Naive thymus-derived CD4-positive, alpha-beta T cell (primary cell): ENCODE measurements at regions of chr6 and their contacts with region 1.

Region 1: DNA sequence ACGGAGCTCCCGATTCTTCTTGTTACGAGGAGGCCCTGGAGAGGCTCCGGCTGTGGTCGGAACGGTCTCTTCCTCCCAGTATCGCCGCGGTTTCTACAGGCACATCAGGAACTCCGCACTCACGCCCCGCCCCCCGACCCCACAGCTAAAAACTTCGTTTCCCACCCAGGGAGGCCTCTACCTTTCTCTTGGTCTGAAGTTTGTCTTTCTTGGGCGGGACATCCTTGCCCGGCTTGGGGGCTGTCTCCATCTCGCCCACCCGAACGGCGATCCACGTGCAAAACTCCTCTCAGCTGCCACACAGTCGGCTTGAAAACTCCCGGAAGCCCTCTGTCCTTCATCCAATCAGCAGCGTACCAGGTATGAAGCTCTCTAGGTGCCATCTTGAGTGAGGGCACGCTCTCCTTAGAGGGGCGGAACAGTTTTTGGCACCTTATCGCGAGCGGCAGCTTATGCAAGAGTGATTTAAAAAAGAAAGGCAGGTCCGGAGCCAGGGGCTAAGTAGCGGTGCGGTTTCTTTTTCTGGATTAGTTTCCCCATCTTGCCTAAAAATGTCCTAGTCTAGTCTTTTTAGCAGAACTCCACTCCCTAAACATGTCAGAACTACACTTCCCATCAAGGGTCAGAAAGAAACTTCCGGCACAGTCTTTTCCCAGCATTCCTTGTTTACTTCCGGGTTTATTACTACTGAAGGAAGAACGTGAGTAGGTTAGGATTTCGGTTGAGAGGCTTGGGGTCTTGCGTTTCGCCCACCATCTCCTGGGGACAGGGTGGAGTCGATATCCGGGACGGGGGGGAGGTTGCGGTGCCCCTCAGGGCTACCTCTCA is at the starts of genes PFDN6 and WDR46:
- DNase-seq: peak; percentile 55 to 90 (median 87)
- ATAC-seq: peak; percentile 96
- H3K4me3 ChIP-seq: peak within 1 kb of the TSS; percentile 97
- H3K4me3 Mint-ChIP-seq: peak within 1 kb of the TSS; percentile 89 to 99 (median 98)
- H3K27ac ChIP-seq: peak within 1 kb of the TSS; percentile 80
- H3K27ac Mint-ChIP-seq: peak within 1 kb of the TSS; percentile 89 to 98 (median 92)
- H3K4me1 ChIP-seq: peaks cover 19 to 20% of the 10 kb centered on the region in 2 donors
- H3K4me1 Mint-ChIP-seq: peaks cover 32 to 51% (median 45%) of the 10 kb centered on the region in 7 donors
- H3K27me3 ChIP-seq: no peaks in the 10 kb centered on the region
- H3K27me3 Mint-ChIP-seq: no peaks in the 10 kb centered on the region
- total RNA-seq, gene PFDN6: 14.6 to 73.2 (median 35.5) TPM
- total RNA-seq, gene WDR46: 25.3 to 62.7 (median 52.7) TPM

Region 2: DNA sequence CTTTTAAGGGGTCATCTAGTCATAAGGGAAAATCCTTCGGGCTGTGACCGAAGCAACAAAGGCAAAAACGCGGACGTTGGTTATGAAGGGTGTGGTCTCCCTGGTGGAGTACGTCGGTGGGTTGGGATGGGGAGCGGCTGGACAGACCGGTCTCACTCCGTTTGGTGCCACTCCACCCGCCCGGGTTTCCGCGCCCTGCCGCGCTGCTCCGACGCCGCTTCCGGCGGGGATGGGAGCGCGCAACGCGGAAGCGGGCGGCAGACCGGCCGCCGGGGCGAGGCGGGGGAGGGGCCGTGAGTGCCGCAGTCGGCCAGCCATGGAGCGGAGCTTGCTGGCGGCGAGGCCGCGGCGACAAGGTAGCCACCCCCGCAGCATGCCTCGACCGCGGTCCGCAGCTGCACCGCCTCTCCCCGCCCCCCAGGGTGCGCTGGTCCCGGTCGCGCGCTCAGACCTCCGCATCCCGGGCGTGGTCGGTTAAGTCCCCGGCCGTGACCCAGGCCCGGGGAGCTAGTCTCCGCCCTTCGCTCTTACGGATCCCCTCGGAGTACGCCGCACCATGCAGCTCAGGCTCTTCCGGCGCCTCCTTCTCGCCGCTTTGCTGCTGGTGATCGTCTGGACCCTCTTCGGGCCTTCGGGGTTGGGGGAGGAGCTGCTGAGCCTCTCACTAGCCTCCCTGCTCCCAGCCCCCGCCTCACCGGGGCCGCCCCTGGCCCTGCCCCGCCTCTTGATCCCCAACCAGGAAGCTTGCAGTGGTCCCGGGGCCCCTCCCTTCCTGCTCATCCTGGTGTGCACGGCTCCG is 12.1 kb before region 1 on chr6 and contains the start of gene B3GALT4:
- CTCF ChIA-PET with region 1: interaction called, 13 read pairs
- POLR2A ChIA-PET with region 1: interaction called, 123 read pairs
- intact Hi-C with region 1: loop called (anchors 1 kb)
- DNase-seq: peak; percentile 55 to 88 (median 63)
- ATAC-seq: peak; percentile 81
- H3K4me3 ChIP-seq: peak within 1 kb of the TSS; percentile 67
- H3K4me3 Mint-ChIP-seq: peak within 1 kb of the TSS; percentile 84 to 99 (median 92)
- H3K27ac ChIP-seq: peak within 1 kb of the TSS; percentile 87
- H3K27ac Mint-ChIP-seq: peak within 1 kb of the TSS; percentile 88 to 98 (median 93)
- H3K4me1 ChIP-seq: peaks cover 47 to 50% of the 10 kb centered on the region in 2 donors
- H3K4me1 Mint-ChIP-seq: peaks cover 38 to 83% (median 65%) of the 10 kb centered on the region in 7 donors
- H3K27me3 ChIP-seq: no peaks in the 10 kb centered on the region
- H3K27me3 Mint-ChIP-seq: no peaks in the 10 kb centered on the region
- total RNA-seq, gene B3GALT4: 12.9 to 48.0 (median 18.2) TPM

Region 3: GRCh38 chr6:33467091-33467490 is 178.0 kb after region 1 on chr6:
- CTCF ChIA-PET with region 1: no interaction called
- POLR2A ChIA-PET with region 1: no interaction called
- intact Hi-C with region 1: no loop called
- DNase-seq: no peak
- ATAC-seq: no peak
- H3K4me3 ChIP-seq: no peak overlapping the region
- H3K4me3 Mint-ChIP-seq: no peak overlapping the region
- H3K27ac ChIP-seq: no peak overlapping the region
- H3K27ac Mint-ChIP-seq: no peak overlapping the region
- H3K4me1 ChIP-seq: no peaks in the 10 kb centered on the region
- H3K4me1 Mint-ChIP-seq: peaks cover 0 to 4% (median 0%) of the 10 kb centered on the region in 7 donors
- H3K27me3 ChIP-seq: no peaks in the 10 kb centered on the region
- H3K27me3 Mint-ChIP-seq: peaks cover 0 to 12% (median 0%) of the 10 kb centered on the region in 5 donors